Caco-2 (cell line): ENCODE measurements at regions of chr16 and their contacts with region 1.

Region 1: GRCh38 chr16:21184834-21185233 is 26.4 kb downstream of the LDAF1 start:
- DNase-seq: no peak
- H3K4me3 ChIP-seq: no peak overlapping the region
- H3K4me3 Mint-ChIP-seq: no peak overlapping the region
- H3K27ac Mint-ChIP-seq: no peak overlapping the region
- H3K4me1 ChIP-seq: peaks cover 3% of the 10 kb centered on the region; the same call in 1 of the 2 replicates
- H3K4me1 Mint-ChIP-seq: no peaks in the 10 kb centered on the region
- H3K27me3 ChIP-seq: no peaks in the 10 kb centered on the region
- H3K27me3 Mint-ChIP-seq: no peaks in the 10 kb centered on the region
- CTCF ChIP-seq: no peak

Region 2: GRCh38 chr16:21120976-21121520 is 63.8 kb before region 1 on chr16:
- CTCF ChIA-PET with region 1: no interaction called
- POLR2A ChIA-PET with region 1: no interaction called
- intact Hi-C with region 1: no loop called
- DNase-seq: no peak
- H3K4me3 ChIP-seq: no peak overlapping the region
- H3K4me3 Mint-ChIP-seq: no peak overlapping the region
- H3K27ac Mint-ChIP-seq: no peak overlapping the region
- H3K4me1 ChIP-seq: no peaks in the 10 kb centered on the region
- H3K4me1 Mint-ChIP-seq: no peaks in the 10 kb centered on the region
- H3K27me3 ChIP-seq: no peaks in the 10 kb centered on the region
- H3K27me3 Mint-ChIP-seq: peaks cover 8% of the 10 kb centered on the region
- CTCF ChIP-seq: no peak

Region 3: GRCh38 chr16:21167360-21167759 is 17.5 kb before region 1 on chr16:
- CTCF ChIA-PET with region 1: no interaction called
- POLR2A ChIA-PET with region 1: no interaction called
- intact Hi-C with region 1: no loop called
- DNase-seq: no peak
- H3K4me3 ChIP-seq: no peak overlapping the region
- H3K4me3 Mint-ChIP-seq: no peak overlapping the region
- H3K27ac Mint-ChIP-seq: no peak overlapping the region
- H3K4me1 ChIP-seq: no peaks in the 10 kb centered on the region
- H3K4me1 Mint-ChIP-seq: no peaks in the 10 kb centered on the region
- H3K27me3 ChIP-seq: no peaks in the 10 kb centered on the region
- H3K27me3 Mint-ChIP-seq: no peaks in the 10 kb centered on the region
- CTCF ChIP-seq: no peak

Region 4: DNA sequence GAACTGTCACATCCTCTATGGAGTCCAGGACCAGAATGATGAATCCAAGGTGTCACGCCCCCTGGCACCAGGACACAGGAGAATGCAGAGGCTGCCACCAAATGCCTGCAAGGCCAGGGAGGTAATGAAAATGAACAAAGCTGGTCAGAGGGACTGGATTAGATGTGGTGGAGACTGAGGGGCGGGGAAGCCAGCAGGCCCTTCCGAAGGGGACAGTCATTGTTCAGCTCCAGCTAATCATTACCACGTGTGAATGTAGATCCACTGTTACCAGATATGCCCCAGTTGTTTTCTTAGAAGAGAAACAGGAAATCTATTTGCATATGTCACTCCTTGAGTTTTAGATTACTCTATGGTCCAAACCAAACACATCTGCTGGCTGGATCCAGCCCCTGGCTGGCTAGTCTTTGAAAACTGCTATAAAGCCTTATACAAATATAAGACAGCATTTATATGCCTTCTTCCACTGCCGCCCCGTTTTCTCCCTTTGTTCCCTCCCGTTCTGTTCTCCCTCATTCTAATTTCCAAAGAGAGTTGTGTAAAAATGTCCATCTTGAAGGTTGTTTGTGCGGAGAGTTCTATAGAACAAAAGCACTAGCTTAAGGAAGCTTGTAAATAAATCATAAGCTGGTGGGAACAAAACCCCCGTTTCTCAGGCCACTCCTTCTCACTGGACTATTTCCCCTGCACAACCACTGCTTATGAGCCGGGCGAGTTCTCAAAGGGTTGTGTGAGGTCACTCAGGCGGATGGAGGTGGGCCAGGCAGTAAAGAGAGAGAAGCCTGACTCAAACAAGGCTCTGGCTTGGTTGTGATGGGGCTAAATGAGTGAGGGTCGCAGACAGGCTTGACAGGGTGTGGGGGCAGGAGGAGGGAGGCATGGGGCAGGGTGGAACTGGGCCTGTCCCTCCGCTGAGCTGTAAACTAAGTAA is 79.1 kb after region 1 on chr16:
- CTCF ChIA-PET with region 1: no interaction called
- POLR2A ChIA-PET with region 1: no interaction called
- intact Hi-C with region 1: loop called (anchors 1 kb)
- DNase-seq: peak in 1 of 2 experiments; percentile 11
- H3K4me3 ChIP-seq: no peak overlapping the region
- H3K4me3 Mint-ChIP-seq: no peak overlapping the region
- H3K27ac Mint-ChIP-seq: peak overlapping the region; percentile 22
- H3K4me1 ChIP-seq: peaks cover 30% of the 10 kb centered on the region
- H3K4me1 Mint-ChIP-seq: peaks cover 21% of the 10 kb centered on the region
- H3K27me3 ChIP-seq: no peaks in the 10 kb centered on the region
- H3K27me3 Mint-ChIP-seq: no peaks in the 10 kb centered on the region
- CTCF ChIP-seq: no peak

Region 5: GRCh38 chr16:21277927-21278706 is 93.3 kb after region 1 on chr16 and contains the start of gene CRYM:
- CTCF ChIA-PET with region 1: interaction called, 5 read pairs
- POLR2A ChIA-PET with region 1: no interaction called
- intact Hi-C with region 1: loop called (anchors 1 kb)
- DNase-seq: peak; percentile 54 to 71
- H3K4me3 ChIP-seq: peak within 1 kb of the TSS; percentile 34
- H3K4me3 Mint-ChIP-seq: peak within 1 kb of the TSS; percentile 75
- H3K27ac Mint-ChIP-seq: no peak within 1 kb of the TSS
- H3K4me1 ChIP-seq: no peaks in the 10 kb centered on the region
- H3K4me1 Mint-ChIP-seq: no peaks in the 10 kb centered on the region
- H3K27me3 ChIP-seq: no peaks in the 10 kb centered on the region
- H3K27me3 Mint-ChIP-seq: peaks cover 6% of the 10 kb centered on the region
- CTCF ChIP-seq: peak; percentile 73 to 89
- total RNA-seq, gene CRYM: 0.39 TPM in 1 of 2 replicates, not detected in the other